ENCODE measurements at regions of chr7 and their contacts with region 1.

Region 1: DNA sequence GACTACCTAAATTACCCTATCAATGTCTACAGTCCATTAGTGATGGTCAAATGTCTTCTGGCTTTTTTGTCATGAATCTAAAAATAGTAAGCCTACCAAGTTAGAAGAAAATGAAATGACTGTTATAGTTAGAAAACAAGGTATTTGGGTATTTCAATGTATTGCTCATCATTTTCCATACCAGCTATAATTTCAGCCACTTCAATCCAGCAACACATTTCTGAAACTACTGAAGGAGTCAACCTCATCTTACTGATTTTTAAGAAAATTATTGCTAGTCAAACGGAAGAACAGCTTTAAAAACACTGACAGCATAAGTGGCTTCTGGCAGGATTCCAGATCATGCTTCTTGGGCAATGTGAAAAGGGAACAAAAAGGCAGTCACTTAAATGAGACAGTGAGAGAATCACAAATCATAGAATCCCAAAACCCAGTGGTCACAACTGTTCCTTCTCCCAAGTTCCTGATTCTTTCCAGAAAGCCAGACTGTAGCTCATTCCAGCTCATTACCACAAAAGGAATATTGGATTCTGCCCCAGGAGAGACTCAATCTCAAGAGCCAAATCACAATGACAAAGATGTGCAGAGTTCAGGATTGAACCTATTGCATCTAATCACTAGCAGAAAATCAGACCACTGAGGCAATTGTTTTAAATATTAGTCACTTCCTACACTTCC is 61.2 kb upstream of the LRRN3 start:
- DNase-seq: peak; percentile 72
- ATAC-seq: peak; percentile 63
- H3K4me3 Mint-ChIP-seq: peak overlapping the region; percentile 34
- H3K27ac Mint-ChIP-seq: peak overlapping the region; percentile 99
- H3K4me1 Mint-ChIP-seq: peaks cover 61% of the 10 kb centered on the region
- H3K27me3 Mint-ChIP-seq: no peaks in the 10 kb centered on the region

Region 2: DNA sequence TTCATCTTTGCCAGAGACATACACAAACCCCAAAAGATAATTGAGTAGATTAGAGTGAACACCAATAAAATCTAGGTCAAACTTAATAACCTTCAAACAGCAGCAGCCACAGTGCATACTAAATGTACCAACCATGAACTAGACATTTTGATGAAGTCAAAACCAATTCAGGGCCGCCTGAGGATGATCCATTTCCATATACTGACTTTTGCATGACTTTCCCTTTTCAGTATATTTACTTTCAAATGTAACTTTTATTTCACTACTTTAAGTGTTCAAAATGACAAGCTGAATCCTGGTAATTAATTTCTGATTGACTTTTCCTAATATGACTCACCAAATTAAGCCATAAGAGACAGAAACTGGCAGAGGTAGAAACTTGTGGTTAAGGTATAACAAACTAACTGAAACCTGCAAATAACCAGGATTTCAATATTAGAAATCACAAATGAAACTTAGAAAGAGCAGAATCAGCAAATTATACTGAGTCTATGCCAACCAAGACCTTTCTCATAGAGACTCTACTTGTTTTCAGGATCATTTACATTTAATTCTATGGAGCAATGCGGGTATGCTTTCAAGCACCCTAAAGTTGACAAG is 110.7 kb before region 1 on chr7:
- CTCF ChIA-PET with region 1: no interaction called
- POLR2A ChIA-PET with region 1: no interaction called
- intact Hi-C with region 1: loop called (anchors 1 to 5 kb)
- DNase-seq: no peak
- ATAC-seq: peak; percentile 68
- H3K4me3 Mint-ChIP-seq: no peak overlapping the region
- H3K27ac Mint-ChIP-seq: no peak overlapping the region
- H3K4me1 Mint-ChIP-seq: peaks cover 13% of the 10 kb centered on the region
- H3K27me3 Mint-ChIP-seq: peaks cover 3% of the 10 kb centered on the region

Region 3: GRCh38 chr7:111012799-111013675 is 16.7 kb before region 1 on chr7:
- CTCF ChIA-PET with region 1: interaction called, 7 read pairs
- POLR2A ChIA-PET with region 1: interaction called, 6 read pairs
- intact Hi-C with region 1: loop called (anchors 1 kb)
- DNase-seq: peak; percentile 57
- ATAC-seq: peak; percentile 81
- H3K4me3 Mint-ChIP-seq: peak overlapping the region; percentile 53
- H3K27ac Mint-ChIP-seq: peak overlapping the region; percentile 85
- H3K4me1 Mint-ChIP-seq: peaks cover 70% of the 10 kb centered on the region
- H3K27me3 Mint-ChIP-seq: no peaks in the 10 kb centered on the region

Region 4: GRCh38 chr7:111083413-111083812 is 53.7 kb after region 1 on chr7:
- CTCF ChIA-PET with region 1: interaction called, 7 read pairs
- POLR2A ChIA-PET with region 1: interaction called, 6 read pairs
- intact Hi-C with region 1: loop called (anchors 1 to 2 kb)
- DNase-seq: peak; percentile 60
- ATAC-seq: peak; percentile 84
- H3K4me3 Mint-ChIP-seq: peak overlapping the region; percentile 49
- H3K27ac Mint-ChIP-seq: peak overlapping the region; percentile 89
- H3K4me1 Mint-ChIP-seq: peaks cover 78% of the 10 kb centered on the region
- H3K27me3 Mint-ChIP-seq: no peaks in the 10 kb centered on the region

Region 5: GRCh38 chr7:111138196-111138569 is 108.5 kb after region 1 on chr7:
- CTCF ChIA-PET with region 1: no interaction called
- POLR2A ChIA-PET with region 1: no interaction called
- intact Hi-C with region 1: loop called in 1 of 2 experiments (anchors 1 kb)
- DNase-seq: peak; percentile 83
- ATAC-seq: peak; percentile 96
- H3K4me3 Mint-ChIP-seq: peak overlapping the region; percentile 53
- H3K27ac Mint-ChIP-seq: peak overlapping the region; percentile 93
- H3K4me1 Mint-ChIP-seq: peaks cover 33% of the 10 kb centered on the region
- H3K27me3 Mint-ChIP-seq: no peaks in the 10 kb centered on the region

Measured in activated CD4-positive, alpha-beta T cell treated with anti-CD3 and anti-CD28 coated beads for 36 hours (primary cell).